ENCODE measurements at regions of chr3 and their contacts with region 1.

Region 1: DNA sequence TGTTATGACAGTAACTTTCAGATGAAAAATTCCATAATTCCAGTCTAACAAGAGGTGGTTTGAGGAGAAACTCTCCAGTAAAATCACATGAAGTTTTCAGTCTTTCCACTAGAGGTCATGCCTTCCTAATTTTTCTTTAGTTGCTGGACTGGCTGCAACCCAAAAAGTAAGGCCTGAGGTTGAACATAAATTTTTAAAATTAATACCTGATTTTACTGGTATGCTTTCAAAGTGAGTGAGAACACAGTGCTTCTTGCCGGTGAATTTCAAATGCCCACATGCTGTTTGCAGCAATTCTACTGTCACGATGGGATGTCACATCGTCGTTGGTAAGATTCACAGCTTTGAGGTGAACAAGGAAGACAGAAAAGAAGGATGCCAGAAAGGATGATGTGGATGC is 89.0 kb upstream of the FGF12 start:
- DNase-seq: peak in 1 of 6 donors; percentile 23
- ATAC-seq: peak; percentile 60 to 80 (median 73)
- H3K4me3 ChIP-seq: no peak overlapping the region
- H3K27ac ChIP-seq: no peak overlapping the region
- H3K4me1 ChIP-seq: no peaks in the 10 kb centered on the region
- H3K27me3 ChIP-seq: no peaks in the 10 kb centered on the region
- CTCF ChIP-seq: peak; percentile 28 to 70 (median 60)

Region 2: DNA sequence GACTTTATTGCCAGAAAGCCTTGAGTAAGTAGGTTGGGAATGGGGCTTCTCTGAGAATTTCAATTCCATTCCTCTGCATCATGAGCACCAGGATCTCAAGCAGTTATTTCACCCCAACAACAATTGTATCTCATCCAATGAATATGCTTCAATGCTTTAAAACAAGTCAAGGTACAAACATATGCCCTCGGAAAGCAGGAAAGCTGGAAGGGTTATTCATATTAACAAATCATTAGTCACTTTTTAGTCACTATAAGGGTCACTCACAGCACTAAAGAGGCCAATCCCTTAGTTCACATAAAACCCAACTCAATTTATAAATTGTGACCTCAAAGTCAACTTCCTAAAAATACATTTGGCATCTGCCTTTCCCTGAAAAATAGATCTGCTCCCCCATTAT is 85.1 kb after region 1 on chr3:
- intact Hi-C with region 1: no loop called
- DNase-seq: no peak
- ATAC-seq: no peak
- H3K4me3 ChIP-seq: no peak overlapping the region
- H3K27ac ChIP-seq: no peak overlapping the region
- H3K4me1 ChIP-seq: no peaks in the 10 kb centered on the region
- H3K27me3 ChIP-seq: no peaks in the 10 kb centered on the region
- CTCF ChIP-seq: no peak

Region 3: GRCh38 chr3:193030276-193030675 is 213.9 kb after region 1 on chr3:
- intact Hi-C with region 1: loop called in 1 of 3 experiments (anchors 10 kb)
- DNase-seq: no peak
- ATAC-seq: no peak
- H3K4me3 ChIP-seq: no peak overlapping the region
- H3K27ac ChIP-seq: no peak overlapping the region
- H3K4me1 ChIP-seq: no peaks in the 10 kb centered on the region
- H3K27me3 ChIP-seq: no peaks in the 10 kb centered on the region
- CTCF ChIP-seq: no peak

Region 4: DNA sequence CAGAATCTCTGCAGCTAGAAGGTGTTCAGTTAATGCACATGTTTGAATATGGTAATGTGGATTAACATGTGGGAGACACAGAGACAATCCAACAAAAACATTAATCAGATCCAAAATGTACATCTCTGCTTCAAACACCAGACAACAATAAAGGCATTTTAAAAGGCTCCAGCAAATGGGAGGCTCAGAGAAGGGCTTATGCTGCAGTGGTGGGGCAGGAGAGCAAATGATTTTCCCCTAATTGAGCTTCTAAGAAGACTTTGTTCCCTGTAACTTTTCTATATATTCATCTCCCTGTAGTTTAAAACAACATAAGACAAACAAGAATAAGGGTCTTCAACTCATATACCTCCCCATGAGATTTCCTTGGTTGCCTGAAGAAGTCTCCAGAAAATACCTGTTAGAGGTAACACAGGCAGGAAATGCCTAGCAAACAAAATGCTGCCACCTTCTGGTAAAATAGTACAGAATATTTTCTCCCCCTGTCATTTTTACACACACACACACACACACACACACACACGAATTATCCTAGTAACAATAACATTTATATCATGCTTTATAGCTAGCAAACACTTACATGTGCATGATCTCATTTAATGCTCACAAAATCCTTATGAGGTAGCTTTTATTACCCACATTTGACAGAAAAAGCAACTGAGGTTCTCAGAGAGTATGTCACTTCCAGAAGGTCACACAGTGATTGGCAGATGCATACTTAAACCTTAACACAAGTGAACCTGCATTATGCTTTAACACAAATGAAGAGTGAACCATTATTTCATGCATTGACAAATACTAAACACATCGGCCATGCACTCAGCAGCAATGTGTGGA is 224.7 kb after region 1 on chr3:
- intact Hi-C with region 1: loop called (anchors 5 to 10 kb)
- DNase-seq: no peak
- ATAC-seq: peak; percentile 50 to 81 (median 73)
- H3K4me3 ChIP-seq: no peak overlapping the region
- H3K27ac ChIP-seq: no peak overlapping the region
- H3K4me1 ChIP-seq: no peaks in the 10 kb centered on the region
- H3K27me3 ChIP-seq: peaks cover 0 to 4% (median 0%) of the 10 kb centered on the region in 4 donors
- CTCF ChIP-seq: peak in 2 of 4 donors; percentile 10 to 22

Region 5: GRCh38 chr3:193572426-193572908 is 756.1 kb after region 1 on chr3:
- intact Hi-C with region 1: loop called in 2 of 3 experiments (anchors 2 to 10 kb)
- DNase-seq: peak in 4 of 6 donors; percentile 41 to 74 (median 50)
- ATAC-seq: peak; percentile 90 to 99 (median 97)
- H3K4me3 ChIP-seq: no peak overlapping the region
- H3K27ac ChIP-seq: no peak overlapping the region
- H3K4me1 ChIP-seq: no peaks in the 10 kb centered on the region
- H3K27me3 ChIP-seq: no peaks in the 10 kb centered on the region
- CTCF ChIP-seq: peak; percentile 44 to 75 (median 54)